ENCODE measurements at regions of chr4 and their contacts with region 1.

Region 1: GRCh38 chr4:123396307-123397143 is at the start of gene SPRY1:
- DNase-seq: peak; percentile 79
- H3K4me3 Mint-ChIP-seq: peak within 1 kb of the TSS; percentile 92
- H3K27ac Mint-ChIP-seq: peak within 1 kb of the TSS; percentile 91
- H3K4me1 Mint-ChIP-seq: peaks cover 25% of the 10 kb centered on the region
- H3K27me3 Mint-ChIP-seq: peaks cover 9% of the 10 kb centered on the region
- total RNA-seq, gene SPRY1: 59.1 and 61.8 TPM in 2 replicates

Region 2: DNA sequence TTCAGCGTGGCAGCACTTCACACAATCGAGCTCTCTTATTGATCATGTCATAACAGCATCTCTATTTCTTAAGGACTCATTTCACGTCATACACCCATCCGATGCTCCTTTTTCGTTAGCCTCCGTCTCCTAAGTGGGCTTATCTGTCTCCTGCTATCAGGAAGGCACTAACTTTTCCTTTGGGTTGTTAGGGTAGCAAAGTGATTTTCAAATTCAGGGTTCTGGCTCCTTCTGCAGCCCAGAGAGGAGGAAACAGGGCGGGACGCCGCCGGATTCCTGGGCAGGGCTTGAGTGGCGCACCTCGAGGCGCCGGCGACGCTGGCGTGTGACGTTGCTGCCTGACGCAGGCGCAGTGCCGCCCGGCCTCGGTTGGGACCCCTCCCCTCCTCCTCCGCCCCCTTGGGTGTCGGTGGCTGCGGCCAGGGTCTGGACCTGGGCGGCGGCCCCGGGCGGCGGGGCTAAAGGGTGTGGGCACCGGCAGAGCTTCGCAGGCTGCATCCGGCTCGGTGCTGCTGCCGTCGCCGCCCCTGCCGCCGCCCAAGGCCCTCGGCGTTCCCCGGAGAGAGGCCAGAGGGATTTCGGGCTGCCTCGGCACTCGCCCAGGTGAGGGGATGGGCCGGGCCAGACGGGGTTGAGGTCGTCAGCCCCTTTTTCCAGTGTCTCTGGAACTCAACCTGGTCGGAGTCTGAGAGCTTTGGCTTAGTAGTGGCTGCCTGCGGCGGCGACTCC is 1244.4 kb before region 1 on chr4 and contains the start of gene BLTP1:
- intact Hi-C with region 1: loop called (anchors 10 kb)
- DNase-seq: peak; percentile 85
- H3K4me3 Mint-ChIP-seq: peak within 1 kb of the TSS; percentile 98
- H3K27ac Mint-ChIP-seq: peak within 1 kb of the TSS; percentile 92
- H3K4me1 Mint-ChIP-seq: peaks cover 50% of the 10 kb centered on the region
- H3K27me3 Mint-ChIP-seq: no peaks in the 10 kb centered on the region
- total RNA-seq, gene BLTP1: 28.1 and 32.6 TPM in 2 replicates

Region 3: GRCh38 chr4:123102897-123103471 is 293.5 kb before region 1 on chr4:
- intact Hi-C with region 1: loop called (anchors 10 kb)
- DNase-seq: no peak
- H3K4me3 Mint-ChIP-seq: no peak overlapping the region
- H3K27ac Mint-ChIP-seq: no peak overlapping the region
- H3K4me1 Mint-ChIP-seq: peaks cover 2% of the 10 kb centered on the region
- H3K27me3 Mint-ChIP-seq: no peaks in the 10 kb centered on the region

Region 4: GRCh38 chr4:123421227-123421936 is 24.9 kb after region 1 on chr4:
- intact Hi-C with region 1: loop called (anchors 1 kb)
- DNase-seq: no peak
- H3K4me3 Mint-ChIP-seq: peak overlapping the region; percentile 5
- H3K27ac Mint-ChIP-seq: peak overlapping the region; percentile 99
- H3K4me1 Mint-ChIP-seq: peaks cover 69% of the 10 kb centered on the region
- H3K27me3 Mint-ChIP-seq: no peaks in the 10 kb centered on the region

Region 5: DNA sequence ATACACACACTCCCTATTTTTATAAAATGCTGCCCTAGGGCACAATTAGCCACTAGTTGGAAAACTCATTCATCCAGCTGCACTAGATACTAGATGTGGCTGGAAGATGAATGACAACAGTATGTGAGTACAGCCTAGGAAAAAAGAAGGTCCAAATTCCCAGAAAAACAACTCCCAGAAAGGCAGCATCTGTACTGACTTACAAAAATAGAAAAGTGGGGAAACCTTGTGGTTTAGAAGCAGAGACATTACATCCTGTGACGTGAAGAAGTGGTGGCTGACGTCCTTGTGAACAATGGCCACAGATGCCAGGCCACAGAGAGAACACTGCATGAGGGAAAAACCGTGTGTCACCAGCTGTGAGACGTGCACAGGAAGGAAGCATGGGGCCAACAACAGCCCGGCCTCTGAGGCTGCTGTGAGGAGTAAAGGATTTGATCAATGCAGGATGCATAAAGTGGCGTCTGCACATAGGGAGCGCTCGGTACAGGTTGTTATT is 81.2 kb after region 1 on chr4:
- intact Hi-C with region 1: loop called (anchors 2 kb)
- DNase-seq: peak; percentile 57
- H3K4me3 Mint-ChIP-seq: peak overlapping the region; percentile 54
- H3K27ac Mint-ChIP-seq: peak overlapping the region; percentile 78
- H3K4me1 Mint-ChIP-seq: peaks cover 49% of the 10 kb centered on the region
- H3K27me3 Mint-ChIP-seq: no peaks in the 10 kb centered on the region

Region 6: GRCh38 chr4:123505095-123506010 is 108.8 kb after region 1 on chr4:
- intact Hi-C with region 1: loop called (anchors 2 kb)
- DNase-seq: no peak
- H3K4me3 Mint-ChIP-seq: peak overlapping the region; percentile 85
- H3K27ac Mint-ChIP-seq: peak overlapping the region; percentile 72
- H3K4me1 Mint-ChIP-seq: peaks cover 18% of the 10 kb centered on the region
- H3K27me3 Mint-ChIP-seq: peaks cover 38% of the 10 kb centered on the region

Region 7: DNA sequence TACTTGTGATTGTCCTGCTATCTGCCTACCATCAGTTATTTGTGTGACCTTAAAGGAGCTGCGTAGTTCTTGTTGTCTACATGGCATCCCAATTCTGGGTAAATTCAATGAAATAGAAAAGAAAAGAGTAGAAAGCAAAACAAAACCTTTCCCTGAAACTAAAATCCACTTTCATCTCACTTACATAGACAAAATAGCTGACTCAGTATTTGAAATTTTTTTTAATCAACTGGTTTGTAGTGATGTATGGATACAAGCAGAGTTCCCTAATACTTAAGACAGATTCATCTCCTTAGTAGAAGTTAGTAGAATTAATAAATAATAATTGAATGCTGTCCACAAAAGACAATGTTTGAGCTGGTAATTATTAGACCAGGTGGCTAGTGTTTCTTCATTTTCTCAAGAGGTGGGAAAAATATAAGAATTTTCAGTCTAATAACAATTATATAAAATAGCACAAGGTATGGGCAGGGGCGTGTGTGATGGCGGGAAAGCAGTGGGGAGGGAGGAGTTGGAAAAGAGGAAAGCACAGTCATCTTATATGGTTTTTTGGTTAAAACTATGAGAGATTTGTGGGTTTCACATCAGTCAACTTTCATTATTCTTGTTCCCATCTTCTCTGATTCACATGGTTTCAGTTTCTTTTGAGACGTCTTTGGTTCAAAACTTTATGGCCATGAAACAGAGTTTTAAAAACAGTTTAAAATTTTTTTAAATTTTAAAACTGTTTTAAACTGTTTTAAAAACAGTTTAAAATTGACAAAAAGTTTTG is 275.3 kb after region 1 on chr4:
- intact Hi-C with region 1: loop called (anchors 1 kb)
- DNase-seq: no peak
- H3K4me3 Mint-ChIP-seq: no peak overlapping the region
- H3K27ac Mint-ChIP-seq: no peak overlapping the region
- H3K4me1 Mint-ChIP-seq: peaks cover 29% of the 10 kb centered on the region
- H3K27me3 Mint-ChIP-seq: peaks cover 72% of the 10 kb centered on the region

Measured in activated T-helper 2 cell treated with anti-CD3 and anti-CD28 coated beads, Interferon-gamma antibody, Interleukin-2, Interleukin-4, amounts not matched to agents 10 μg/mL and 5 μg/mL and 100 μg/mL, durations not matched to agents 14 hours and 24 hours and 36 hours (primary cell).